Naive thymus-derived CD4-positive, alpha-beta T cell (primary cell): ENCODE measurements at regions of chr12 and their contacts with region 1.

Region 1: DNA sequence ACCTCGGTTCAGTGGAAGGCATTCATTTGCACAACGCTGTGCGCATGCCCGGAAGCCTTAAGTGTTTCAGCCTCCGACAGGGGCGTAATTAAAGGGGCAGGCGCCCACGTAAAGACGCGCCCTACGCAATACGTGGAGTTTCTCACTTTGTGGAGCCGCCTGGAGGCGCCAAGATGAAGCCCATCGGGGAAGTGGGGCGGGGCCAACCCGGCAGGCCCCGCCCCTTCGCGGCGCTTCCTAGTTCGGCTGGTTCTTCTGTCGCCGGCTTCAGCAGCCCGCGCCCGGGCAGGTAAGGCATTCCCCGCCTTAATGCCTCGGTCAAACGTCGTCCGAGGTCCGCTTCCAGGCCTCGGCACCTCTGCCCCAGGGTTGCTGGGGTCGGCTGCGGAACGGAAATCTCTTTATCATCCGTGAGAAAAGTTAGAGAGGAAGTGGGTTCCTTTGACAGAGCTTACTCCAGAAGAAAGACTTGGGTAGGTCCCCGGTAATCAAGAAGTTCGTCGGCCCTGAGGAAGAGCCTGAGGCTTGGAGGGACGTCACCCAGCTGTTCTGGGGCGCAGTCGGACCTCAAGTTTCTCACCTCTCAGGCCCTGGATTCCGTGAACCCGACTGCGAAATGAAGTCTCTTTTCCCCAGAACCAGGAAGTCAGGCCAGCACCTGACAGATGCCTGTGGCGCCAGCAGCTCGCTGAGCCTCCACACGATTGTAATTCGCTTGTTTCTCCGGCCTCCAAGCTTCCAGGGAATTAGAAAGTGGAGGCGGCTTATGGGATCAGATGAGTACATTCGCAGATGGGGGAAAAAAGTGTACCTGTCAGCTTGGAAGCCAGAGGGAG is at the starts of genes IRAK4 and PUS7L:
- DNase-seq: peak; percentile 83 to 95 (median 92)
- ATAC-seq: peak; percentile 99
- H3K4me3 ChIP-seq: peak within 1 kb of the TSS; percentile 78
- H3K4me3 Mint-ChIP-seq: peak within 1 kb of the TSS; percentile 88 to 99 (median 97)
- H3K27ac ChIP-seq: peak within 1 kb of the TSS; percentile 86
- H3K27ac Mint-ChIP-seq: peak within 1 kb of the TSS; percentile 84 to 99 (median 99)
- H3K4me1 ChIP-seq: peaks cover 41 to 42% of the 10 kb centered on the region in 2 donors
- H3K4me1 Mint-ChIP-seq: peaks cover 52 to 89% (median 85%) of the 10 kb centered on the region in 7 donors
- H3K27me3 ChIP-seq: no peaks in the 10 kb centered on the region
- H3K27me3 Mint-ChIP-seq: no peaks in the 10 kb centered on the region
- total RNA-seq, gene IRAK4: 35.6 to 69.1 (median 52.7) TPM
- total RNA-seq, gene PUS7L: 14.0 to 27.4 (median 23.2) TPM

Region 2: DNA sequence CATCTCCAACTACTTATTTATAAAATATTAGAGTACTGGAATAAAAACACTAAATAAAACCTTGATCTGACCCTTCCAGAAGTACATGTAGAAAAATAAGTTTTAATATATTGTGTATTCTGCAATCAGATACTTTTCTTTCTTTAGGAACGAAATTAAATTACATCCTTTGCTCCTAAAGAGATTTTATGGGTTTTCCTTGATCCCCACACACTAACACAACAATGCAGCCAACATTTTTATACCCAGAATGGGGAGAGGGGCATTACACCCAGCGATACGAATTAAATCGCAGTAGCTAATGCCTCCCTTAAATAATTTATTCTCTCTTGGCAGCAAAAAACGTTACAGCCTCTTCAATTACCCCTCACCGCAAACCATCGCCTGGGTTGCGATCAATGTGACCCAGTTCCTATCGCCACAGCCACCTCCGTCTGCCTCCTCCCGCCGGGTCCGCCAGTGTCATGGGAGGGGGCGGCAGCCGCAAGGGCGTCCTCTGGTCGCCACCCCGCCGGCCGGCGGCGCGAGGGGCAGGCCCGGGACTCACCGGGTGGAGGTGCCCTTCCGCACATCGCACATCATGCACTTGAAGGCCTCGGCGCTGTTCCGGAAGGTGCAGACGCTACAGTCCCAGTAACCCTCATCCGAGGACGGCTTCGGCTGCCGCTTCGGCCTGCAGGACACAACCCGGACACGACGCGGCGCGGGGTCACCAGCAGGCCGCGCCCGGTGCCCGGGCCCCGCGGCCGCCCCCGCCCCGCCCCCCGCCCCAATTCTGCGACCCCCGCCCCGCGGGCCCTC is 1521.7 kb before region 1 on chr12:
- CTCF ChIA-PET with region 1: no interaction called
- POLR2A ChIA-PET with region 1: no interaction called
- intact Hi-C with region 1: loop called in 1 of 2 experiments (anchors 5 kb)
- DNase-seq: peak; percentile 60 to 75 (median 71)
- ATAC-seq: peak; percentile 82
- H3K4me3 ChIP-seq: peak overlapping the region; percentile 58
- H3K4me3 Mint-ChIP-seq: peak overlapping the region; percentile 90 to 97 (median 92)
- H3K27ac ChIP-seq: peak overlapping the region; percentile 92
- H3K27ac Mint-ChIP-seq: peak overlapping the region; percentile 82 to 94 (median 89)
- H3K4me1 ChIP-seq: peaks cover 18 to 23% of the 10 kb centered on the region in 2 donors
- H3K4me1 Mint-ChIP-seq: peaks cover 31 to 58% (median 47%) of the 10 kb centered on the region in 7 donors
- H3K27me3 ChIP-seq: no peaks in the 10 kb centered on the region
- H3K27me3 Mint-ChIP-seq: no peaks in the 10 kb centered on the region

Region 3: GRCh38 chr12:43586646-43587245 is 172.2 kb before region 1 on chr12:
- CTCF ChIA-PET with region 1: no interaction called
- POLR2A ChIA-PET with region 1: no interaction called
- intact Hi-C with region 1: no loop called
- DNase-seq: no peak
- ATAC-seq: no peak
- H3K4me3 ChIP-seq: no peak overlapping the region
- H3K4me3 Mint-ChIP-seq: no peak overlapping the region
- H3K27ac ChIP-seq: no peak overlapping the region
- H3K27ac Mint-ChIP-seq: no peak overlapping the region
- H3K4me1 ChIP-seq: no peaks in the 10 kb centered on the region
- H3K4me1 Mint-ChIP-seq: no peaks in the 10 kb centered on the region
- H3K27me3 ChIP-seq: no peaks in the 10 kb centered on the region
- H3K27me3 Mint-ChIP-seq: peaks cover 0 to 10% (median under 1%) of the 10 kb centered on the region in 5 donors

Region 4: GRCh38 chr12:43776498-43776897 is 17.6 kb after region 1 on chr12:
- CTCF ChIA-PET with region 1: interaction called, 5 read pairs
- POLR2A ChIA-PET with region 1: interaction called, 9 read pairs
- intact Hi-C with region 1: loop called in 1 of 2 experiments (anchors 1 kb)
- DNase-seq: peak in 7 of 9 donors; percentile 19 to 55 (median 38)
- ATAC-seq: peak; percentile 66
- H3K4me3 ChIP-seq: no peak overlapping the region
- H3K4me3 Mint-ChIP-seq: no peak overlapping the region
- H3K27ac ChIP-seq: no peak overlapping the region
- H3K27ac Mint-ChIP-seq: no peak overlapping the region
- H3K4me1 ChIP-seq: no peaks in the 10 kb centered on the region
- H3K4me1 Mint-ChIP-seq: peaks cover 0 to 12% (median 6%) of the 10 kb centered on the region in 7 donors
- H3K27me3 ChIP-seq: no peaks in the 10 kb centered on the region
- H3K27me3 Mint-ChIP-seq: no peaks in the 10 kb centered on the region

Region 5: DNA sequence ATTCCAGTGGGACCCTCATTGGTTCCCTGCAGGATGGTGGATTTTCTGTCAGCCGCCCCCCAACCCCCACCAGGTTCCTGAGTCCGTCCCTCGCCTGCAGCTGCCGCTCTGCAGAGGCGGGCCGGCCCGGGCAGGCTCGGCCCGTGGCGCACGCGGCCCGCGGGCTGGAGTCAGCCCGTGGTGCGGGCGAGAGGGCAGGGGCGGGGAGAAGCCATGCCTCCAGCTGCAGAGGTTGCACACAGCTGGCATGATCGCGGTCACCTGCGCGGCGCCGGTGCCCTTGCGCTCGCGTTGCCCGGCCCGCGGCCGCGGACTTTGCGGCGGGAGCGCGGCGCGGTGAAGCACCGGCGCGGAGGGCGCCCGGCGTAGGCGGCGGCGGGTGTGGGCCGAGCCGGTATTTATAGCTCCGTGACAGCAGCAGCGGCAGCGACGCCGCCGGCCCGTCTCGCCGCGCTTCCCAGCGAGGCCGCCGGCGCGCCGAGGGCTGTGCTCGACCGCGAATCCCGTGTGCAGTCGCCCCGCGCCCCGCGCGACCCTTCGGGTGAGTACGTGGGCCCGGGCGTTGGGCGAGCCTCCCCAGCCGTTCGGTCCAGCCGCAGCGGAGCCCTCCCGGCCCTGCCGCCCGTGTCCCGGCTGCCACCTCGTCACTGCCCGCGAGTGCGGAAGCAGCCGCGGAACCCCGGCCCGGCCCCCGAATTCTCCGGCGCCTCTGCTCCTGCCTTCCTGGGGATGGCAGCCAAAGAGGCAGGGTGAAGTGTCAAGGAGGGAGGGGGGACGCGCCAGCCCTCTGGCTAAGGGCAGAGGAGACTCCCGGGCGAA is 76.9 kb after region 1 on chr12 and contains the start of gene TMEM117:
- CTCF ChIA-PET with region 1: no interaction called
- POLR2A ChIA-PET with region 1: interaction called, 16 read pairs
- intact Hi-C with region 1: loop called (anchors 1 to 2 kb)
- DNase-seq: peak; percentile 40 to 73 (median 67)
- ATAC-seq: peak; percentile 83
- H3K4me3 ChIP-seq: peak within 1 kb of the TSS; percentile 73
- H3K4me3 Mint-ChIP-seq: peak within 1 kb of the TSS; percentile 83 to 95 (median 90)
- H3K27ac ChIP-seq: peak within 1 kb of the TSS; percentile 81
- H3K27ac Mint-ChIP-seq: peak within 1 kb of the TSS; percentile 47 to 94 (median 89)
- H3K4me1 ChIP-seq: peaks cover 21 to 27% of the 10 kb centered on the region in 2 donors
- H3K4me1 Mint-ChIP-seq: peaks cover 25 to 75% (median 56%) of the 10 kb centered on the region in 7 donors
- H3K27me3 ChIP-seq: no peaks in the 10 kb centered on the region
- H3K27me3 Mint-ChIP-seq: peaks cover 0 to 45% (median 0%) of the 10 kb centered on the region in 5 donors
- total RNA-seq, gene TMEM117: 0.31 to 6.6 (median 4.2) TPM

Region 6: DNA sequence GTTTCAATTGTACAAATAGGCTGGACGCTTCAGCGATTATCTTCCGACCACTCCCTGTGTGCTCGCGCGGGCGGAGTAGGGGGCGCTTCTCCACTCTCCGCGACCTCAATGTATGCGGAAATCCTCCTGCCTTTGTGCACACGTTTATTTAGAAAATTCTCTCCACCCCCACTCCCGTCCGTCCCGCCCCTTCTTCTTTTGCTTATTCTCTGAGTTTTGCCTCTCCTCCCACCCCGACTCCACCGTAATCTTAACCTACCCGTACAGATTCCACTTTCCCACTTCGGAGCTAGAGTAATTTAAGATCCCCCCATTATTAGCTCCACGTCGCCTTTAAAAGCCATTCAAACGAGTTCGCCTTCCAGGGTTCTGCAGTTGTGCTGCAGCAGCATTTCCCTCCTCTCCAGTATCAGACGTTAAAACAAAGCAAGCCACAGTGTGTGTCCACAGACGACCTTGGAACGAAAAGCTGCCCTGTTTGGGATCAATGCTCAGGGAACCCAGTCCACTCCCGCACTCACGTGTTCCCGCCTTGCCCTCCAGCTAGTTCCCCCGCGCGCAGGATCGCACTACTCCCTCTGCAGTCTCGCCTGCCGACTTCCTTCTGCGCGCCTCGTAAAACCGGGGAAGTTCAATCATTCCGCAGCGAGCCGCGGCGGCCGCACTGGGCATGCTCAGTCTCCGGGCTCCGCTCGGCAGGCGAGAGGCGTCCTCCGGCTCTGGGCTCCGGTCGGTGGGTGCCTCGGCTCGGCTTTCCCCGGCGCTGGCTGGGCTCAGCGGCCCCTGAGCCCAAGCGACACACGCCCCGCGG is 1456.7 kb after region 1 on chr12 and contains the start of gene ANO6:
- CTCF ChIA-PET with region 1: no interaction called
- POLR2A ChIA-PET with region 1: no interaction called
- intact Hi-C with region 1: loop called in 1 of 2 experiments (anchors 2 kb)
- DNase-seq: peak; percentile 58 to 85 (median 71)
- ATAC-seq: peak; percentile 86
- H3K4me3 ChIP-seq: peak within 1 kb of the TSS; percentile 83
- H3K4me3 Mint-ChIP-seq: peak within 1 kb of the TSS; percentile 90 to 99 (median 97)
- H3K27ac ChIP-seq: peak within 1 kb of the TSS; percentile 69
- H3K27ac Mint-ChIP-seq: peak within 1 kb of the TSS; percentile 83 to 96 (median 95)
- H3K4me1 ChIP-seq: peaks cover 17% of the 10 kb centered on the region in 2 donors
- H3K4me1 Mint-ChIP-seq: peaks cover 26 to 70% (median 59%) of the 10 kb centered on the region in 7 donors
- H3K27me3 ChIP-seq: no peaks in the 10 kb centered on the region
- H3K27me3 Mint-ChIP-seq: no peaks in the 10 kb centered on the region
- total RNA-seq, gene ANO6: 15.1 to 29.7 (median 25.3) TPM